ENCODE measurements at regions of chr7 and their contacts with region 1.

Region 1: GRCh38 chr7:135672560-135673359 is 10.4 kb downstream of the STMP1 start:
- DNase-seq: peak; percentile 48
- ATAC-seq: peak; percentile 88
- H3K4me3 ChIP-seq: no peak overlapping the region
- H3K27ac ChIP-seq: no peak overlapping the region
- H3K4me1 ChIP-seq: no peaks in the 10 kb centered on the region
- H3K27me3 ChIP-seq: no peaks in the 10 kb centered on the region
- CTCF ChIP-seq: peak; percentile 71
- EP300 ChIP-seq: no peak
- POLR2A ChIP-seq: no peak
- RAD21 ChIP-seq: peak; percentile 33; the same call in 1 of the 2 replicates

Region 2: GRCh38 chr7:135977007-135977741 is 304.4 kb after region 1 on chr7 and contains the start of gene MTPN:
- CTCF ChIA-PET with region 1: no interaction called
- POLR2A ChIA-PET with region 1: no interaction called
- in situ Hi-C with region 1: no loop called
- intact Hi-C with region 1: loop called (anchors 5 kb)
- DNase-seq: peak; percentile 96
- ATAC-seq: peak; percentile 99
- H3K4me3 ChIP-seq: peak within 1 kb of the TSS; percentile 98 to 100 (median 100)
- H3K27ac ChIP-seq: peak within 1 kb of the TSS; percentile 59
- H3K4me1 ChIP-seq: peaks cover 32% of the 10 kb centered on the region
- H3K27me3 ChIP-seq: no peaks in the 10 kb centered on the region; a peak in 1 of 5 replicates
- CTCF ChIP-seq: no peak
- EP300 ChIP-seq: 0 out of 4 replicates have a peak, but pooled peaks of 1 of the 2 experiments have one; percentile 15
- POLR2A ChIP-seq: peak; percentile 65 to 75
- RAD21 ChIP-seq: no peak
- total RNA-seq, gene MTPN: 71.7 and 119 TPM in 2 replicates

Region 3: GRCh38 chr7:136009488-136010079 is 336.8 kb after region 1 on chr7:
- CTCF ChIA-PET with region 1: no interaction called
- POLR2A ChIA-PET with region 1: no interaction called
- in situ Hi-C with region 1: loop called (anchors 10 kb)
- intact Hi-C with region 1: loop called (anchors 2 kb)
- DNase-seq: peak; percentile 16
- ATAC-seq: no peak
- H3K4me3 ChIP-seq: no peak overlapping the region
- H3K27ac ChIP-seq: no peak overlapping the region
- H3K4me1 ChIP-seq: no peaks in the 10 kb centered on the region
- H3K27me3 ChIP-seq: no peaks in the 10 kb centered on the region
- CTCF ChIP-seq: peak; percentile 63
- EP300 ChIP-seq: no peak
- POLR2A ChIP-seq: no peak
- RAD21 ChIP-seq: peak; percentile 38; the same call in 1 of the 2 replicates

Measured in HepG2 (cell line).